HepG2 (cell line): ENCODE measurements at regions of chr22 and their contacts with region 1.

Region 1: DNA sequence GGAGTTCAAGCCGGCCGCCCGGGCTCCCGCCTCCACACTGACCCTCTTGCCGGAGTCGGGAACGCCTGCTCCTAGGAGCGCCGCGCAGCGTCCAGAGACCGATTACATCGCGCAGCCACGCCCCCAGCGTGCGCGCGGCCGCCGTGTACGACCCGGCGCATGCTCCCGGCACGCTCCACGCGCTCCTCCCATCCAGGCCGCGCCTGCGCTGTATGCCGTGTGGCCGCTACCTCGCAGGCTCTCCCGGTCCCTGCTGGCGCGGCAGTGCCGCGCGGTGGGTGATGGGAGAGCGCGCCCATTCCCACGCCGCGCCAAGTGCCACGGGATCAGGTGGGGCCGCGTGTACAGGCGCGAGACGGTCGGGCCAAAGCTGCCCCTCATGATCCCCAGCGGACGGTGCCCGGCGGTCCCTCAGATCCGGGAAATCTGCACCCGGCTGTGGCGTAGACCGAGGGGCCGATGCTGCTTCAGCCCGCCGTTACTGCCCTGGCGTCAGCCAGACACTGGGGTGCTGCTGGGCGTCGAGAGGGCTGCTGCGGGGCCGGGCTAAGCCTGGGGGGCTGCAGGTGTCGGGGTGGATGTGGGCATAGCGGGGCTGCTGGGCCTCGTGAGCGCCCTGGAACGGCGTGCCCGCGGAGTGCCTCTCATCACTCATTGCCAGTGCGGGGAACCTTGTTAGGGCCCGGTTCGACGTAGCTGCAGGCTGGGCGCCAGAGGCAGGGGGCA is at the starts of genes GNB1L and RTL10:
- DNase-seq: peak; percentile 90
- ATAC-seq: peak; percentile 88
- H3K4me3 ChIP-seq: peak within 1 kb of the TSS; percentile 70 to 96 (median 94)
- H3K27ac ChIP-seq: peak within 1 kb of the TSS; percentile 99
- H3K4me1 ChIP-seq: peaks cover 45% of the 10 kb centered on the region
- H3K27me3 ChIP-seq: no peaks in the 10 kb centered on the region; a peak in 1 of 5 replicates
- CTCF ChIP-seq: peak; percentile 69
- EP300 ChIP-seq: 0 out of 4 replicates have a peak, but pooled peaks of 1 of the 2 experiments have one; percentile 7
- POLR2A ChIP-seq: peak; percentile 96 to 97
- RAD21 ChIP-seq: peak; percentile 65; the same call in 1 of the 2 replicates
- total RNA-seq, gene GNB1L: 7.4 and 7.7 TPM in 2 replicates
- total RNA-seq, gene RTL10: 14.1 and 17.6 TPM in 2 replicates

Region 2: DNA sequence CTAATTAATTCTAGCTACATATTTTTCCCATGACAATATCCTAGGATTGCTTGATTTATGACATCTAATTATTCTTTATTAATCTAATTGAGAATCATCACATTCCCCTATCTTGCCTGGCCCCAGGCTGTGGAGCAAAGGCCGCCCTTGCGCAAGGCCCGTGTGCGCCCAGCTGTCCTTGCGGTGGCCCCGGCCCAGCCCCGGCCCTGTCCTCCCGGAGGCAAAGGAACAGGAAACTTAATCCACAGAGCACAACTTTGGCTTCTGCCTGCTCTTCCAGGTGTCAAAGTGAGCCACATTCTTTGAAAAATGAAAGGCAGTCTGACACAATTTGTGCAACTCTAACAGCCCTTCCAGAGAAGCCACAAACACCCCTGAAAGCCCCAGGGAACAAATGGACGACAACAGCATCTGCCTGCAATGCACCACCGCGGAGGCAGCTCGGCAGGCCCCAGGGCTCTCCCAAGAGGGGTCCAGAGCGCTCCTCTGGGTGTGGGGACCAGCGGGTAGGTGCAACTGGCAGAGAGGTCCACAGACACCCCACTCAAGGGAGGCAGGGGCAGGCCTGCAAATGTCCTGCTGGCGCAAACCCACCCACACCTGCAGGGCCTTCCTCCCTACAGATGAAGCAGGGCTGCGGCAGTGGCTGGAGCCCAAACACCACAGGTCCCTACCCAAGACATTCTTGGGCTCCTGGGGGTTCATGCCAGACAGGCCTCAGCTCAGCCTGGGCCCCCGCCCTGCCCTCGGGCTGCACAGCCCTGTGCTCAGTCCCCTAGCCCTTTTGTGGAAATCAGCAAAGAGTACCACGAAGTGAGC is 30.5 kb before region 1 on chr22:
- CTCF ChIA-PET with region 1: no interaction called
- POLR2A ChIA-PET with region 1: interaction called, 12 read pairs
- in situ Hi-C with region 1: no loop called
- intact Hi-C with region 1: no loop called
- DNase-seq: peak; percentile 41
- ATAC-seq: peak; percentile 91
- H3K4me3 ChIP-seq: peak overlapping the region; percentile 11 to 58 (median 34); a peak in 5 of 6 replicates
- H3K27ac ChIP-seq: peak overlapping the region; percentile 77
- H3K4me1 ChIP-seq: peaks cover 48% of the 10 kb centered on the region
- H3K27me3 ChIP-seq: no peaks in the 10 kb centered on the region
- CTCF ChIP-seq: no peak
- EP300 ChIP-seq: peak in 1 of 2 experiments; percentile 49; a peak in 2 of 4 replicates
- POLR2A ChIP-seq: 0 out of 4 replicates have a peak, but pooled peaks of 1 of the 2 experiments have one; percentile 38
- RAD21 ChIP-seq: no peak

Region 3: GRCh38 chr22:19879695-19880506 is 25.0 kb after region 1 on chr22:
- CTCF ChIA-PET with region 1: no interaction called
- POLR2A ChIA-PET with region 1: no interaction called
- in situ Hi-C with region 1: no loop called
- intact Hi-C with region 1: loop called (anchors 1 kb)
- DNase-seq: peak; percentile 12
- ATAC-seq: no peak
- H3K4me3 ChIP-seq: no peak overlapping the region
- H3K27ac ChIP-seq: peak overlapping the region; percentile 45
- H3K4me1 ChIP-seq: peaks cover 34% of the 10 kb centered on the region
- H3K27me3 ChIP-seq: no peaks in the 10 kb centered on the region
- CTCF ChIP-seq: no peak
- EP300 ChIP-seq: no peak
- POLR2A ChIP-seq: no peak
- RAD21 ChIP-seq: no peak

Region 4: GRCh38 chr22:19891317-19892256 is 36.6 kb after region 1 on chr22:
- CTCF ChIA-PET with region 1: no interaction called
- POLR2A ChIA-PET with region 1: interaction called, 10 read pairs
- in situ Hi-C with region 1: no loop called
- intact Hi-C with region 1: no loop called
- DNase-seq: peak; percentile 71
- ATAC-seq: peak; percentile 70
- H3K4me3 ChIP-seq: no peak overlapping the region; a peak in 1 of 6 replicates
- H3K27ac ChIP-seq: peak overlapping the region; percentile 66
- H3K4me1 ChIP-seq: peaks cover 27% of the 10 kb centered on the region
- H3K27me3 ChIP-seq: no peaks in the 10 kb centered on the region
- CTCF ChIP-seq: peak; percentile 6; the same call in 1 of the 2 replicates
- EP300 ChIP-seq: peak in 1 of 2 experiments; percentile 47; a peak in 1 of 4 replicates
- POLR2A ChIP-seq: no peak
- RAD21 ChIP-seq: no peak

Region 5: GRCh38 chr22:19903031-19903430 is 48.1 kb after region 1 on chr22:
- CTCF ChIA-PET with region 1: no interaction called
- POLR2A ChIA-PET with region 1: interaction called, 11 read pairs
- in situ Hi-C with region 1: loop called (anchors 5 kb)
- intact Hi-C with region 1: no loop called
- DNase-seq: no peak
- ATAC-seq: no peak
- H3K4me3 ChIP-seq: no peak overlapping the region
- H3K27ac ChIP-seq: no peak overlapping the region
- H3K4me1 ChIP-seq: peaks cover 55% of the 10 kb centered on the region
- H3K27me3 ChIP-seq: no peaks in the 10 kb centered on the region
- CTCF ChIP-seq: no peak
- EP300 ChIP-seq: no peak
- POLR2A ChIP-seq: no peak
- RAD21 ChIP-seq: no peak

Region 6: DNA sequence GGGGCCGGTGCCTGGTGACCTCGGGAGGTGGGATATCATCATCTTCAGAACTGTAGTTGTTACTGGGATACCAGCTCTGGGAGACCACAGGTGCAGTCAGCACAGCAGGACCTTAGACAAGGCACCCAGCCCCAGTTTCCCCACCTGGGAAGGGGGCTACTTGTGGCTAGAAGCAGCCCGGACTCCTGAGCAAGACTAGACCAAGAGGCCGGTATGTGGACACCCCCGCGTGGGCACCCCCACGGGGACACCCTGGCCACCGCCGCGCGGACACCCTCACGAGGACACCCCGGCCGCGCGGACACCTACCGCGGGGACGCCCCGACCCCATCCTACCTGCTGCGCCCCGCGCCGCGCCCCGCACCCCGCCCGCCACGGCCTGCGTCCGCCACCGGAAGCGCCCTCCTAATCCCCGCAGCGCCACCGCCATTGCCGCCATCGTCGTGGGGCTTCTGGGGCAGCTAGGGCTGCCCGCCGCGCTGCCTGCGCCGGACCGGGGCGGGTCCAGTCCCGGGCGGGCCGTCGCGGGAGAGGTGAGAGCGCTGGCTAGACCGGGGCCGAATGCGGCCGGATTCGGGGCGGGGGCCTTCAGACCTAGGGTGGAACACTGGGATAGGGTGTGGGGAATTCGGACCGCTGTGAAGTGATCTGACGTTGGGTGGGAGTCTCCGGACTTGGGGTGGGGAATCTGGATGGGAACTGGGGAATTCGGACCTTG is 86.6 kb after region 1 on chr22 and contains the starts of genes COMT and TXNRD2:
- CTCF ChIA-PET with region 1: no interaction called
- POLR2A ChIA-PET with region 1: interaction called, 18 read pairs
- in situ Hi-C with region 1: no loop called
- intact Hi-C with region 1: no loop called
- DNase-seq: no peak
- ATAC-seq: peak; percentile 87
- H3K4me3 ChIP-seq: peak within 1 kb of the TSS; percentile 68 to 92 (median 89)
- H3K27ac ChIP-seq: peak within 1 kb of the TSS; percentile 93
- H3K4me1 ChIP-seq: peaks cover 79% of the 10 kb centered on the region
- H3K27me3 ChIP-seq: no peaks in the 10 kb centered on the region; a peak in 1 of 5 replicates
- CTCF ChIP-seq: no peak; the same call in 1 of the 2 replicates
- EP300 ChIP-seq: 0 out of 4 replicates have a peak, but pooled peaks of 1 of the 2 experiments have one; percentile 19
- POLR2A ChIP-seq: peak in 1 of 2 experiments; percentile 72; a peak in 2 of 4 replicates
- RAD21 ChIP-seq: no peak; the same call in 1 of the 2 replicates
- total RNA-seq, gene COMT: 144 and 162 TPM in 2 replicates
- total RNA-seq, gene TXNRD2: 16.4 and 18.6 TPM in 2 replicates